ENCODE measurements at regions of chr4 and their contacts with region 1.

Region 1: DNA sequence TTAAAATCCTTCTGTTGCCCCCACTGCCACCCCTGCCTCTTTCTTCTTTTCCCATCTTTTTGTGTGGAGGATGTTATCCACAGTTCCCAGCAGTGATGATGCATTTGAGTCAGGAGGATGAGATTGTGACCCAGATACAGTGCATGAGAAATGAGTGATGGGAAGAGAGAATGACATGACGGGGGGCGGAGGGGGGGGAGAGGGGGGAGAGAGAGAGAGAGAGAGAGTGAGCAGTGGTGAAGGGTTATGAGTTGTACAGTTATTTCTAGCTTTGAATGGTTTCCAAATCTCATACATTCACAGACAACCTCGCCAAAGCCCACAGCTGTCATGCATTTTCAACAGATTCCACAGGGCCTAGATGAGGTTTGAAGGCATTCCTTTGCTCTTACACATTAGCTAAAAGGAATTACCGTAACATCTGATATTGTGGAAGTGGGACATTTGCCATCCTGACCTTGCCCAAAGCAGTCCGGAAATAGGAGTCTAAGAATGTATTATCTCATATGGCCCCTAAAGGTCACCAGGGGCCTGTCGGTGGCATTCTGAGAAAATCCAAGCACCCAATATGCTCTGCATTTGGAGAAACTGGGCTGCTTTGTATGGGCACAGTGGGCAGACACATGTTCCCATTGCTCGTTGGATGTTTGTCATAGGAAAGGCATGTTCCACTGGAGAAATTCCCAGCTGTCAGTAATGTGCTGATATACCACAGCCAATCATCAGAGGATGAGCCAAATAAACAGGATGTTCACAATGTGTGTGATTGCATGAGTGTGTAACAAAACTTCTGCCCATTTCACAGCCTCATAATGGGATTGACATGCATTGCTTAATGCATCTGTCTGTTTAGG is 435.8 kb downstream of the SPRY1 start:
- DNase-seq: peak; percentile 95
- H3K4me3 ChIP-seq: no peak overlapping the region
- H3K27ac ChIP-seq: peak overlapping the region; percentile 69 to 85 (median 74)
- H3K4me1 ChIP-seq: peaks cover 25 to 40% (median 36%) of the 10 kb centered on the region in 4 donors
- H3K27me3 ChIP-seq: no peaks in the 10 kb centered on the region
- CTCF ChIP-seq: no peak
- EP300 ChIP-seq: peak; percentile 87
- POLR2A ChIP-seq: no peak

Region 2: GRCh38 chr4:122783301-122784215 is 1048.8 kb before region 1 on chr4:
- intact Hi-C with region 1: no loop called
- DNase-seq: no peak
- H3K4me3 ChIP-seq: peak overlapping the region in 3 of 4 donors; percentile 0 to 20 (median 17)
- H3K27ac ChIP-seq: peak overlapping the region; percentile 59 to 78 (median 72)
- H3K4me1 ChIP-seq: peaks cover 22 to 39% (median 32%) of the 10 kb centered on the region in 4 donors
- H3K27me3 ChIP-seq: no peaks in the 10 kb centered on the region
- CTCF ChIP-seq: no peak
- EP300 ChIP-seq: no peak
- POLR2A ChIP-seq: no peak

Region 3: GRCh38 chr4:123588631-123589241 is 243.7 kb before region 1 on chr4:
- intact Hi-C with region 1: no loop called
- DNase-seq: no peak
- H3K4me3 ChIP-seq: no peak overlapping the region
- H3K27ac ChIP-seq: peak overlapping the region; percentile 33 to 63 (median 56)
- H3K4me1 ChIP-seq: peaks cover 0 to 14% (median 10%) of the 10 kb centered on the region in 4 donors
- H3K27me3 ChIP-seq: no peaks in the 10 kb centered on the region
- CTCF ChIP-seq: no peak
- EP300 ChIP-seq: no peak
- POLR2A ChIP-seq: no peak

Region 4: GRCh38 chr4:123785538-123785937 is 46.9 kb before region 1 on chr4:
- intact Hi-C with region 1: loop called (anchors 5 kb)
- DNase-seq: peak; percentile 93
- H3K4me3 ChIP-seq: peak overlapping the region in 2 of 4 donors; percentile 8 to 13
- H3K27ac ChIP-seq: peak overlapping the region; percentile 74 to 83 (median 78)
- H3K4me1 ChIP-seq: peaks cover 15 to 68% (median 60%) of the 10 kb centered on the region in 4 donors
- H3K27me3 ChIP-seq: no peaks in the 10 kb centered on the region
- CTCF ChIP-seq: no peak
- EP300 ChIP-seq: no peak
- POLR2A ChIP-seq: no peak

Region 5: GRCh38 chr4:124018383-124019317 is 186.2 kb after region 1 on chr4:
- intact Hi-C with region 1: loop called (anchors 10 kb)
- DNase-seq: peak; percentile 93
- H3K4me3 ChIP-seq: peak overlapping the region in 1 of 4 donors; percentile 44
- H3K27ac ChIP-seq: peak overlapping the region; percentile 73 to 83 (median 76)
- H3K4me1 ChIP-seq: peaks cover 15 to 39% (median 31%) of the 10 kb centered on the region in 4 donors
- H3K27me3 ChIP-seq: no peaks in the 10 kb centered on the region
- CTCF ChIP-seq: no peak
- EP300 ChIP-seq: no peak
- POLR2A ChIP-seq: no peak